Left colon (tissue), 2 donors: ENCODE measurements at regions of chr7 and their contacts with region 1.

Region 1: GRCh38 chr7:39746103-39746819 is 122.9 kb downstream of the RALA start:
- DNase-seq: peak; percentile 64 to 84
- ATAC-seq: peak; percentile 91

Region 2: DNA sequence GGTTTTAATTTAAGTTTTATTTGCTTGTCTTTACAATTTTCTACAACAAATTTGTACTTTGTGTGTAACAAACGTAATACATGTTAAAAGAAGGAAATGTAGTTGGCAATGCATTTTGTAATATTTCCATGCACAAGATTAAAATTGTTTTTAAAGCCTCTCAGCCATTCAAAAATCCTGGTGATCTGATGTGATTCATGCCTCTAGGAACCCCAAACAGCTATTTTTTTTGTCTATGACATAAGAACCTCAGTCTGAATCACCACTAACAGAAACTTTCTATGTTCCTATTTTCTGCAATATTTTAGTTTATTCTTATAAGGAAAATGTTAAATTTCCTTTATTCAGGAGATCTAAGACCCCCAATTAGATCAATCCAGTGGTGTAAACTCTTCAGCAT is 363.1 kb before region 1 on chr7:
- intact Hi-C with region 1: no loop called
- DNase-seq: no peak
- ATAC-seq: no peak

Region 3: GRCh38 chr7:39580149-39580874 is 165.9 kb before region 1 on chr7:
- intact Hi-C with region 1: loop called (anchors 2 to 10 kb)
- DNase-seq: peak; percentile 66 to 84
- ATAC-seq: peak; percentile 99